ENCODE measurements at regions of chr1 and their contacts with region 1.

Region 1: DNA sequence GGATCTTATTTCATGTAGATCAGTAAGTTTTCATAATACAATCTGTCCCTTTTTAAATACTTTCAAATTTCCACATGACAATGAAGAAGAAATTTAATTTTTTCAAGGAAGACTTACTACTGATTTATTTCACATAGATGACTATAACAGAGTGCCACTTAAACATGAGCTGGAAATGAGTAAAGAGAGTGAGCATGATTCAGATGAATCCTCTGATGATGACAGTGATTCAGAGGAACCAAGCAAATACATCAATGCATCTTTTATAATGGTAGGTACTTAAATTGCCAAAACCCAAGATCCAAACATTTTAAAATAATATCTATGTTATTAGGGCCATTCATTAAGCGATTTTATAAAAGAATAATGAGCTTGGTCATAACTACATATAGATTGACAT is 110.4 kb downstream of the PTPRC start:
- DNase-seq: no peak
- ATAC-seq: no peak
- H3K4me3 Mint-ChIP-seq: no peak overlapping the region
- H3K27ac Mint-ChIP-seq: peak overlapping the region; percentile 26
- H3K4me1 Mint-ChIP-seq: no peaks in the 10 kb centered on the region
- H3K27me3 Mint-ChIP-seq: no peaks in the 10 kb centered on the region
- CTCF ChIP-seq: no peak

Region 2: GRCh38 chr1:198713081-198713480 is 36.2 kb before region 1 on chr1:
- CTCF ChIA-PET with region 1: no interaction called
- POLR2A ChIA-PET with region 1: no interaction called
- intact Hi-C with region 1: loop called (anchors 5 kb)
- DNase-seq: no peak
- ATAC-seq: no peak
- H3K4me3 Mint-ChIP-seq: no peak overlapping the region
- H3K27ac Mint-ChIP-seq: peak overlapping the region; percentile 63
- H3K4me1 Mint-ChIP-seq: peaks cover 4% of the 10 kb centered on the region
- H3K27me3 Mint-ChIP-seq: no peaks in the 10 kb centered on the region
- CTCF ChIP-seq: no peak

Region 3: GRCh38 chr1:198939956-198940355 is 190.7 kb after region 1 on chr1:
- CTCF ChIA-PET with region 1: no interaction called
- POLR2A ChIA-PET with region 1: no interaction called
- intact Hi-C with region 1: no loop called
- DNase-seq: no peak
- ATAC-seq: no peak
- H3K4me3 Mint-ChIP-seq: no peak overlapping the region
- H3K27ac Mint-ChIP-seq: no peak overlapping the region
- H3K4me1 Mint-ChIP-seq: peaks cover 25% of the 10 kb centered on the region
- H3K27me3 Mint-ChIP-seq: no peaks in the 10 kb centered on the region
- CTCF ChIP-seq: no peak

Measured in activated B cell treated with CpG ODN at 0.5 μM for 24 hours (primary cell).